ENCODE measurements at regions of chr14 and their contacts with region 1.

Region 1: GRCh38 chr14:66624299-66624937 is 116.5 kb downstream of the GPHN start:
- DNase-seq: peak; percentile 56 to 78
- H3K4me3 ChIP-seq: no peak overlapping the region
- H3K4me1 ChIP-seq: peaks cover 25% of the 10 kb centered on the region
- H3K27me3 ChIP-seq: no peaks in the 10 kb centered on the region

Region 2: GRCh38 chr14:66476964-66477363 is 147.5 kb before region 1 on chr14:
- in situ Hi-C with region 1: no loop called
- DNase-seq: no peak
- H3K4me3 ChIP-seq: no peak overlapping the region
- H3K4me1 ChIP-seq: peaks cover 6% of the 10 kb centered on the region; the same call in 1 of the 2 replicates
- H3K27me3 ChIP-seq: no peaks in the 10 kb centered on the region

Region 3: DNA sequence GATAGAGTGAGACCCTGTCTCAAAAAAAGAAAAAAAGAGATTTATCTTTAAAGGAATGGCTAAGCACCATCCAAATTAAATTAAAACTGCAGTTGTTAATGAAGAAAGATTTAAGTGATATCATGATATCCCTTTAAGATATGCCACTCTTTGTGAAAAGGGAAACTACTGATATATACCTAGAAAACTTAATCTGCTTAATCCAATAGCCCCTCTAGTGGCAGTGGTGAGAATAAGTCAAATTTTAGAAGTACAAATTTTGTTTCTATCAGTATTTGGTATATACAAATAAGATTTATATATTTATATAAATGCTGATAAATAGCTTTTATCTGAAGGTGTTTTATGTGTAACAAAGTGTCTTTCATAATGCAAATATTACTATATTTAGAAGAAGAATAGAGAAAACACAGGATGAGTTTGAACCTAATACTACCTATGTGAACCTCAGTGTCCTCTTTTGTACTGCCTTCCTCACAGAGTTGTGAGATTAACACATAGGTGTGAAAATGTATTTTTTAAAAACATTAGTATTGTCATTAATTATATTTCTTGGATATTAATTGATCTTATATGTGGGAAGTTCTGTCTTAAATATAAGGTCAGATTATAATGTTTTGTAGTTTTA is 513.4 kb after region 1 on chr14:
- in situ Hi-C with region 1: loop called (anchors 10 kb)
- DNase-seq: peak in 1 of 2 experiments; percentile 61
- H3K4me3 ChIP-seq: no peak overlapping the region
- H3K4me1 ChIP-seq: peaks cover 3% of the 10 kb centered on the region
- H3K27me3 ChIP-seq: no peaks in the 10 kb centered on the region